ENCODE measurements at regions of chr7 and their contacts with region 1.

Region 1: GRCh38 chr7:3134715-3135114 is 91.0 kb upstream of the CARD11 start:
- DNase-seq: no peak
- ATAC-seq: no peak
- H3K4me3 ChIP-seq: no peak overlapping the region
- H3K27ac ChIP-seq: no peak overlapping the region
- H3K4me1 ChIP-seq: no peaks in the 10 kb centered on the region
- H3K27me3 ChIP-seq: no peaks in the 10 kb centered on the region
- CTCF ChIP-seq: no peak

Region 2: GRCh38 chr7:3520206-3520605 is 385.5 kb after region 1 on chr7:
- CTCF ChIA-PET with region 1: no interaction called
- POLR2A ChIA-PET with region 1: interaction called, 14 read pairs
- in situ Hi-C with region 1: no loop called
- intact Hi-C with region 1: no loop called
- DNase-seq: no peak
- ATAC-seq: no peak
- H3K4me3 ChIP-seq: no peak overlapping the region
- H3K27ac ChIP-seq: peak overlapping the region; percentile 29; the same call in 1 of the 2 replicates
- H3K4me1 ChIP-seq: peaks cover 17% of the 10 kb centered on the region
- H3K27me3 ChIP-seq: no peaks in the 10 kb centered on the region
- CTCF ChIP-seq: no peak

Region 3: DNA sequence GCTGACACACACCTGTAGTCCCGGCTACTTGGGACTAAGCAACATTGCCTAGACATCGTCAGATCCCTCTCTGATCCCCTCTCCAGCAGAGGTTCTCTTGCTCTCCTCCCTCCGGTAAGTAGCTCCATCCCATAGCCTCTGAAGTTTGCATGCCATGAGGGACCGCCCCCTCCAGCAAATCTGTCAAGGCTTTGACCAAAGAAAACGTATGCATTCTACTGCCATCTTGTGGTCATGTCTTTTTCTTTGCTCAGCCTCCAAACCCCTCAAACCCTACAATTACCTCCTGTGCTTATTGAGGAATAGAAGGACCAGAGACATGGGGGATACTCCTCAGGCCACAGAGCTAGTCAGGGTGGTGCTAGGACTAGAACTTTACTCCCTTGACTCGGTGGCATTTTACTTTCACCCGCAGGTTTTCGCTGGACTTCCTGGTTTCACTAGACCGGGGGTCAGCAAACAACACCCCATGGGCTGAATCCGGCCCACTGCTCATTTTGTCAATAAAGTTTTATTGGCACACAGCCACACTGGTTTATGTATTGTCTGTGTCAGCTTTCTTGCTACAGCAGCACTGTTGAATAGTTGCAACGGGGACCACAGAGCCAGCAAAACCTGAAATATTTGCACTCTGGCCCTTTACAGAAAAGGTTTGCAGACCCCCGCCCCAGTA is 1344.8 kb after region 1 on chr7:
- CTCF ChIA-PET with region 1: interaction called, 10 read pairs
- POLR2A ChIA-PET with region 1: no interaction called
- in situ Hi-C with region 1: no loop called
- intact Hi-C with region 1: no loop called
- DNase-seq: peak; percentile 18
- ATAC-seq: peak; percentile 96
- H3K4me3 ChIP-seq: no peak overlapping the region
- H3K27ac ChIP-seq: no peak overlapping the region
- H3K4me1 ChIP-seq: no peaks in the 10 kb centered on the region
- H3K27me3 ChIP-seq: peaks cover 10% of the 10 kb centered on the region
- CTCF ChIP-seq: peak; percentile 84